Tibial artery (tissue), 4 donors: ENCODE measurements at regions of chr11 and their contacts with region 1.

Region 1: GRCh38 chr11:6298605-6299004 is 21.7 kb downstream of the CAVIN3 start:
- DNase-seq: no peak
- H3K4me3 ChIP-seq: no peak overlapping the region
- H3K27ac ChIP-seq: no peak overlapping the region
- H3K4me1 ChIP-seq: no peaks in the 10 kb centered on the region
- H3K27me3 ChIP-seq: no peaks in the 10 kb centered on the region
- CTCF ChIP-seq: peak; percentile 25 to 29

Region 2: DNA sequence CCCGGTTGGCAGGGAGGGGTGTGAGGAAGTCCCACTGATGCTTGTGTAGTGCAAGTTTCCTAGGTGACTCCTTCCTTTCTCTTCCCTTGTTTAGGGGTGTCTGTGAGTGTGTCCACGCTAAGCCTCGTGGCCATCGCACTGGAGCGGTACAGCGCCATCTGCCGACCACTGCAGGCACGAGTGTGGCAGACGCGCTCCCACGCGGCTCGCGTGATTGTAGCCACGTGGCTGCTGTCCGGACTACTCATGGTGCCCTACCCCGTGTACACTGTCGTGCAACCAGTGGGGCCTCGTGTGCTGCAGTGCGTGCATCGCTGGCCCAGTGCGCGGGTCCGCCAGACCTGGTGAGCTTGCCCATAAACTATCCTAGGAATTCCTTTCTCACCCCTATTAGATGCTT is 28.6 kb before region 1 on chr11:
- intact Hi-C with region 1: no loop called
- DNase-seq: no peak
- H3K4me3 ChIP-seq: no peak overlapping the region
- H3K27ac ChIP-seq: no peak overlapping the region
- H3K4me1 ChIP-seq: peaks cover 0 to 8% (median 5%) of the 10 kb centered on the region in 4 donors
- H3K27me3 ChIP-seq: peaks cover 0 to 9% of the 10 kb centered on the region in 2 donors
- CTCF ChIP-seq: no peak

Region 3: GRCh38 chr11:6362873-6363678 is 64.5 kb after region 1 on chr11:
- intact Hi-C with region 1: loop called (anchors 5 kb)
- DNase-seq: peak; percentile 85 to 90
- H3K4me3 ChIP-seq: peak overlapping the region in 1 of 2 donors; percentile 3
- H3K27ac ChIP-seq: peak overlapping the region; percentile 66 to 83
- H3K4me1 ChIP-seq: peaks cover 0 to 32% (median 18%) of the 10 kb centered on the region in 4 donors
- H3K27me3 ChIP-seq: no peaks in the 10 kb centered on the region
- CTCF ChIP-seq: peak; percentile 87 to 90